CD4-positive, alpha-beta memory T cell (primary cell): ENCODE measurements at regions of chr2 and their contacts with region 1.

Region 1: GRCh38 chr2:202574541-202574940 is 60.2 kb upstream of the FAM117B start:
- DNase-seq: no peak
- H3K4me3 ChIP-seq: no peak overlapping the region
- H3K4me3 Mint-ChIP-seq: no peak overlapping the region
- H3K27ac ChIP-seq: no peak overlapping the region
- H3K27ac Mint-ChIP-seq: peak overlapping the region in 1 of 7 donors; percentile 37
- H3K4me1 ChIP-seq: no peaks in the 10 kb centered on the region
- H3K4me1 Mint-ChIP-seq: no peaks in the 10 kb centered on the region
- H3K27me3 ChIP-seq: no peaks in the 10 kb centered on the region
- H3K27me3 Mint-ChIP-seq: no peaks in the 10 kb centered on the region

Region 2: GRCh38 chr2:202700075-202700901 is 125.7 kb after region 1 on chr2:
- CTCF ChIA-PET with region 1: interaction called, 10 read pairs
- POLR2A ChIA-PET with region 1: no interaction called
- intact Hi-C with region 1: no loop called
- DNase-seq: peak in 3 of 5 donors; percentile 5 to 11 (median 6)
- H3K4me3 ChIP-seq: no peak overlapping the region
- H3K4me3 Mint-ChIP-seq: peak overlapping the region in 2 of 8 donors; percentile 13 to 22
- H3K27ac ChIP-seq: no peak overlapping the region
- H3K27ac Mint-ChIP-seq: peak overlapping the region in 6 of 7 donors; percentile 10 to 83 (median 50)
- H3K4me1 ChIP-seq: peaks cover 23% of the 10 kb centered on the region
- H3K4me1 Mint-ChIP-seq: peaks cover 20 to 46% (median 36%) of the 10 kb centered on the region in 4 donors
- H3K27me3 ChIP-seq: no peaks in the 10 kb centered on the region
- H3K27me3 Mint-ChIP-seq: no peaks in the 10 kb centered on the region

Region 3: GRCh38 chr2:202870431-202871299 is 296.1 kb after region 1 on chr2:
- CTCF ChIA-PET with region 1: interaction called, 7 read pairs
- POLR2A ChIA-PET with region 1: no interaction called
- intact Hi-C with region 1: loop called (anchors 1 kb)
- DNase-seq: peak; percentile 44 to 57 (median 51)
- H3K4me3 ChIP-seq: peak overlapping the region; percentile 59 to 62
- H3K4me3 Mint-ChIP-seq: peak overlapping the region; percentile 87 to 97 (median 94)
- H3K27ac ChIP-seq: peak overlapping the region; percentile 51
- H3K27ac Mint-ChIP-seq: peak overlapping the region in 6 of 7 donors; percentile 18 to 71 (median 59)
- H3K4me1 ChIP-seq: peaks cover 3% of the 10 kb centered on the region
- H3K4me1 Mint-ChIP-seq: peaks cover 5 to 13% (median 9%) of the 10 kb centered on the region in 4 donors
- H3K27me3 ChIP-seq: no peaks in the 10 kb centered on the region
- H3K27me3 Mint-ChIP-seq: no peaks in the 10 kb centered on the region

Region 4: DNA sequence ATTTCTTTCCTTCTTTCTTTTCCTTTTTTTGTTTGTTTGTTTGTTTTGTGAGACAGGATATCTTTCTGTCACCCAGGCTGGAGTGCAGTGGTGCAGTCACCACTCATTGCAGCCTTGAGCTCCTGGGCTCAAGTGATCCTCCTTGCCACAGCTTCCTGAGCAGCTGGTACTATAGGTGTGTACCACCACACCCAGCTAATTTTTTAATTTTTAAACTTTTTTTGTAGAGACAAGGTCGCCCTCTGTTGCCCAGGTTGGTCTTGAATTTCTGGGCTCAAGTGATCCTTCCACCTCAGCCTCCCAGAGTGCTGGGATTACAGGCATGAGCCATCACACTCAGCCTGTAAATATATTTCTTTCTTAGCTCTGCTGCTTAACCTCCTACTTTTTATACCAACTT is 580.9 kb after region 1 on chr2:
- CTCF ChIA-PET with region 1: no interaction called
- POLR2A ChIA-PET with region 1: no interaction called
- intact Hi-C with region 1: loop called (anchors 2 kb)
- DNase-seq: peak in 4 of 5 donors; percentile 10 to 20 (median 17)
- H3K4me3 ChIP-seq: no peak overlapping the region
- H3K4me3 Mint-ChIP-seq: peak overlapping the region in 1 of 8 donors; percentile 14
- H3K27ac ChIP-seq: no peak overlapping the region
- H3K27ac Mint-ChIP-seq: peak overlapping the region in 6 of 7 donors; percentile 20 to 75 (median 40)
- H3K4me1 ChIP-seq: peaks cover 9% of the 10 kb centered on the region
- H3K4me1 Mint-ChIP-seq: peaks cover 7 to 12% (median 10%) of the 10 kb centered on the region in 4 donors
- H3K27me3 ChIP-seq: no peaks in the 10 kb centered on the region
- H3K27me3 Mint-ChIP-seq: no peaks in the 10 kb centered on the region

Region 5: DNA sequence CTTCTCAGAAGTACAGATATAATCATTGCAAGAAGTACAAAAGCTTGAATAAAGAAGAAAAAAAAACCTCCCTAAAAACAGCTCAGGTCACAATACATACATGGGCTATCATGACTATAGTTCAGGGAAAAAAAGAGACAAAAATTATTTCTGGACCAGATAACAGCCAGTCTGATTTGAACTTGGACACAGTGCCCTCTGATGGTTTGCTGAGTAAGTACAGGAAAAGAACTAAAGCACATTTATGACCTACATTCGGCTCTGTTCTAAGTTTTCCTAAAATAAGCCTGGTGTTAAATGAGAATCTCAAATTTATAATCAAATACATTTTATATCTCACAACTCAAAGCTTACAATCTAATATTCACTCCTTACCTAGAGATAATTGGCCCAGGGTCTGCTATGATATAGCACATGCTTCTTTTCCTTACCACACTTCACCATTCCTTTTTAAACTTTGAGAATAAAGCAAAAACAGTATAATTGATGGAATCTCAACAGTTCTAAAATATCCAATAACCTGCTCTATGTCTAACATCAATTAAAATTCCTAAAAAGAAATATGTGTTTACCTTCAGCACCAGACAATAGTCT is 879.4 kb after region 1 on chr2:
- CTCF ChIA-PET with region 1: interaction called, 4 read pairs
- POLR2A ChIA-PET with region 1: no interaction called
- intact Hi-C with region 1: loop called (anchors 1 kb)
- DNase-seq: peak; percentile 33 to 44 (median 35)
- H3K4me3 ChIP-seq: no peak overlapping the region
- H3K4me3 Mint-ChIP-seq: no peak overlapping the region
- H3K27ac ChIP-seq: no peak overlapping the region
- H3K27ac Mint-ChIP-seq: no peak overlapping the region
- H3K4me1 ChIP-seq: no peaks in the 10 kb centered on the region
- H3K4me1 Mint-ChIP-seq: no peaks in the 10 kb centered on the region
- H3K27me3 ChIP-seq: no peaks in the 10 kb centered on the region
- H3K27me3 Mint-ChIP-seq: no peaks in the 10 kb centered on the region